ENCODE measurements at regions of chr10 and their contacts with region 1.

Region 1: GRCh38 chr10:24209946-24210491 is 1.1 kb downstream of the KIAA1217 start:
- DNase-seq: peak in 1 of 2 experiments; percentile 19
- H3K4me3 ChIP-seq: peak overlapping the region; percentile 65
- H3K4me3 Mint-ChIP-seq: peak overlapping the region; percentile 91
- H3K27ac Mint-ChIP-seq: peak overlapping the region; percentile 93
- H3K4me1 ChIP-seq: peaks cover 56% of the 10 kb centered on the region
- H3K4me1 Mint-ChIP-seq: peaks cover 69% of the 10 kb centered on the region
- H3K27me3 ChIP-seq: no peaks in the 10 kb centered on the region
- H3K27me3 Mint-ChIP-seq: no peaks in the 10 kb centered on the region
- CTCF ChIP-seq: no peak

Region 2: DNA sequence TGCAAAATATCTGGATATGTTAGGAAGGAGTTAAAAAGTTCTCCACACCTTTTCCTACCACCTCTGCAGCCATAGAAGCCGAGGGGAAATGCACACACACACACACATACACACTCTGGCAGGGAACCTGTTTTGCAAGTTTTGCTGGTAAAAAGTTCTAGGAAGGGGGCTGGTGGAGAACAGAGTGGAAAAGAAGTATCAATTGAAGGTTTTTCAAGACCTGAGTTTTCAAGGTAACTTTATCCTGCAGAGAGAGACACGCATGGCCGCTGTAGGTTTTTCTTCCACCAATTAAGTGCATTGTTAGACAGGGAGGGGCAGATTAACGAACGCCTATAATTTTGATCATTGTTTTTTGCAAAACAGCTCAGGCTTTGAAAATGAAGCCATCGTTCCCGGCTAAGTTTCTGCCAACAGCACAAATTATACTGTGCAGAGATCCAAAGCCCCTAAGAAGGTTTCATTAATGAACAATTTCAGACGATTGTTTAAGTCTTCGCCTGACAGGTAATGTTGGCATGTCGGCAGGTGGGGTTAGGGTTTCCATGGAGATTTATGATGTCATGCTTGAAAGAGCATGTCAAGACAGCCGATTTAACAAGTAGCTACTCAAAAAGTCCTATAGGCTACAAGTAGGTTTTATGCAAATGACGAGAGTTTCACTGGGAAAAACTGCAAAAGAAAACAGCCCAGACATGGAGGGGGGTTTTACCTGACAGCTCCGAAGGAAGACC is 28.7 kb after region 1 on chr10:
- CTCF ChIA-PET with region 1: no interaction called
- POLR2A ChIA-PET with region 1: interaction called, 10 read pairs
- intact Hi-C with region 1: loop called (anchors 1 kb)
- DNase-seq: peak; percentile 87 to 88
- H3K4me3 ChIP-seq: peak overlapping the region; percentile 35
- H3K4me3 Mint-ChIP-seq: peak overlapping the region; percentile 89
- H3K27ac Mint-ChIP-seq: peak overlapping the region; percentile 97
- H3K4me1 ChIP-seq: peaks cover 44% of the 10 kb centered on the region
- H3K4me1 Mint-ChIP-seq: peaks cover 74% of the 10 kb centered on the region
- H3K27me3 ChIP-seq: no peaks in the 10 kb centered on the region
- H3K27me3 Mint-ChIP-seq: no peaks in the 10 kb centered on the region
- CTCF ChIP-seq: no peak

Region 3: DNA sequence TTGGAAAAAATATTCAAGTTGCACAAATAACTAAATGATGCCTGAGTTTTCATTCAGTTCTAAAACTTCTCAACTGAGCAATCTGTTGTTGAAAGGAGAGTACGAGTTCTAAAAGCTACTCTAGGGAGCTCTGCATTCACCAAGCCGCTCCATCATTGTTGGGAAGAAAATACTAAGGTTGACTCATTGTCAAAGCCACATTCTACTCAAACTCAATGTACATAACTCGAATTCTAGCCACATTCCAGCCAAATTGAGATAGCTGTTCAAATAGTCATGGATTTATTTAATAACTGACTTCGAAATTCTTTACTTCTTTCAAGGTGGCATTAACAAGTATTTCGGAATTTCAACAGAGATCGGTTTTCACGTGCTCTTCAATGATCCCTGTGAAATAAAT is 62.4 kb after region 1 on chr10:
- CTCF ChIA-PET with region 1: no interaction called
- POLR2A ChIA-PET with region 1: interaction called, 4 read pairs
- intact Hi-C with region 1: loop called (anchors 5 kb)
- DNase-seq: peak in 1 of 2 experiments; percentile 41
- H3K4me3 ChIP-seq: no peak overlapping the region
- H3K4me3 Mint-ChIP-seq: peak overlapping the region; percentile 57
- H3K27ac Mint-ChIP-seq: peak overlapping the region; percentile 45
- H3K4me1 ChIP-seq: peaks cover 32% of the 10 kb centered on the region
- H3K4me1 Mint-ChIP-seq: peaks cover 31% of the 10 kb centered on the region
- H3K27me3 ChIP-seq: no peaks in the 10 kb centered on the region
- H3K27me3 Mint-ChIP-seq: no peaks in the 10 kb centered on the region
- CTCF ChIP-seq: no peak

Region 4: GRCh38 chr10:24383681-24384106 is 173.7 kb after region 1 on chr10:
- CTCF ChIA-PET with region 1: no interaction called
- POLR2A ChIA-PET with region 1: interaction called, 8 read pairs
- intact Hi-C with region 1: loop called (anchors 2 kb)
- DNase-seq: peak; percentile 87 to 90
- H3K4me3 ChIP-seq: no peak overlapping the region
- H3K4me3 Mint-ChIP-seq: peak overlapping the region; percentile 58
- H3K27ac Mint-ChIP-seq: peak overlapping the region; percentile 92
- H3K4me1 ChIP-seq: peaks cover 31% of the 10 kb centered on the region
- H3K4me1 Mint-ChIP-seq: peaks cover 23% of the 10 kb centered on the region
- H3K27me3 ChIP-seq: no peaks in the 10 kb centered on the region
- H3K27me3 Mint-ChIP-seq: no peaks in the 10 kb centered on the region
- CTCF ChIP-seq: peak; percentile 60 to 67

Region 5: GRCh38 chr10:24556750-24557742 is 347.0 kb after region 1 on chr10:
- CTCF ChIA-PET with region 1: no interaction called
- POLR2A ChIA-PET with region 1: no interaction called
- intact Hi-C with region 1: loop called (anchors 5 kb)
- DNase-seq: peak; percentile 68 to 71
- H3K4me3 ChIP-seq: no peak overlapping the region
- H3K4me3 Mint-ChIP-seq: no peak overlapping the region
- H3K27ac Mint-ChIP-seq: no peak overlapping the region
- H3K4me1 ChIP-seq: 0 out of 2 replicates have a peak, but pooled peaks cover 2% of the 10 kb centered on the region
- H3K4me1 Mint-ChIP-seq: peaks cover 8% of the 10 kb centered on the region
- H3K27me3 ChIP-seq: no peaks in the 10 kb centered on the region
- H3K27me3 Mint-ChIP-seq: no peaks in the 10 kb centered on the region
- CTCF ChIP-seq: peak; percentile 86 to 87

Measured in Caco-2 (cell line).